ENCODE measurements at regions of chr14 and their contacts with region 1.

Region 1: DNA sequence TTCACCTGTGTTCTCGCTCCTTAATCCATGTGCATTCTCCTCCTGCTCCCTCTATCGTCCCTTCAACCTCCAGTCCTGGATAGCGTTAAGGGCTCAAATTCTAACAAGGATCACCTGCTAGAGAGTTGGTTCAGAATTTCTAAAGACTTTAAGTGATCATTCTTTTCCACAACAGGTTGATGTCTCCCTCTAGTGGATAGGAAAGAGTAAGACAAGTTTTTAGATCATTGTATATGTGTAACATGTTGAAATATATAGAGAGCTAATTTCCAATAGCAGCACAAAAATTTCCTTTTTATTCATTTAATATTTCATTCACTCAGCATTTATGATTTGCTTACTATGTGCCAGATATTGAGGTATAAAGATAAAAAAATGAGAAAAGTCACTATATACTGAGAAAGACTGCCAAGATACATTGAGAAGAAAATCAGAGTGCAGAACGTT is 9.3 kb upstream of the ESR2 start:
- DNase-seq: no peak
- H3K4me3 Mint-ChIP-seq: no peak overlapping the region
- H3K27ac Mint-ChIP-seq: no peak overlapping the region
- H3K4me1 Mint-ChIP-seq: peaks cover 3% of the 10 kb centered on the region
- H3K27me3 Mint-ChIP-seq: peaks cover 7% of the 10 kb centered on the region

Region 2: GRCh38 chr14:63800651-63801375 is 502.7 kb before region 1 on chr14:
- CTCF ChIA-PET with region 1: interaction called, 11 read pairs
- POLR2A ChIA-PET with region 1: no interaction called
- DNase-seq: no peak
- H3K4me3 Mint-ChIP-seq: no peak overlapping the region
- H3K27ac Mint-ChIP-seq: no peak overlapping the region
- H3K4me1 Mint-ChIP-seq: peaks cover 12% of the 10 kb centered on the region
- H3K27me3 Mint-ChIP-seq: peaks cover 1% of the 10 kb centered on the region